ENCODE measurements at regions of chr4 and their contacts with region 1.

Region 1: GRCh38 chr4:122602277-122603142 is 18.4 kb downstream of the IL21 start:
- DNase-seq: no peak
- ATAC-seq: peak; percentile 50

Region 2: GRCh38 chr4:122716825-122717448 is 114.4 kb after region 1 on chr4:
- intact Hi-C with region 1: loop called (anchors 2 kb)
- DNase-seq: peak; percentile 68
- ATAC-seq: no peak

Region 3: GRCh38 chr4:122922877-122923511 is 320.5 kb after region 1 on chr4:
- intact Hi-C with region 1: loop called (anchors 5 kb)
- DNase-seq: peak; percentile 88
- ATAC-seq: peak; percentile 98

Region 4: DNA sequence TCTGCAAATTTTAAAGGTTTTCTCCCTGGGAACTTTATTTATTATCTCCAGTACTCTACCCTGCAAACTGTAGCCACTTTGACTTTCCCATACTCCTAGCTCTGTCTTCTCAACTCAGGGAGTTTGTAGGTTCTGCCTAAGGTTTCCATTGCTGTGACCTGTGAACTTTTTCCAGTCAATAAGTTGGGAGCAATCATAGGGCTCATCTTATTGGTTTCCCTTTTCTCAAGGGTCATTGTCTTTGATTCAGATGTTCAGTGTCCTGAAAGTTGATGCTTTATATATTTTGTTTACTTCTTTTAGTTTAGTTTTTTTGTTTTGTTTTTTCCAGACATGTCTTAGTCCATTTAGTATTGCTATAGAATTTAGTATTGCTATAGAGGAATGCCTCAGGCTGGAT is 405.2 kb after region 1 on chr4:
- intact Hi-C with region 1: no loop called
- DNase-seq: no peak
- ATAC-seq: no peak